Left ventricle myocardium superior (tissue), 1 donor: ENCODE measurements at regions of chr2 and their contacts with region 1.

Region 1: DNA sequence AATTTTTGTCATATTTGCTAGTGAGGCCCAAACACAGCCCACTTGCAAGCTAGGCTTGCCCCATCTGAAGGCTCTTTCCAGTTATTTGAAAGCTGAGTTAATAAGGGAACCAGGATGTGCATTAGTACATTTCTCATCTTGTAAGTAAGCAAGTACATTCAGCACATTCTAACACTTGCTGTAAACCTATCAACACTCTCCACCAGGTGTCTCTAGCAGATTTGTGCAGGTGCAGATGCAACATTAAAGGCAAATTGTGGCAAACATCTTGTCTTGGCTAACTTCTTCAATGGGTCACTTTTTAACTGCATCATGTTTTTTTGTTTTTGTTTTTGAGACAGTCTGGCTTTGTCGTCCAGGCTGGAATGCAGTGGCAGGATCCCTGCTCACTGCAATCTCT is 25.3 kb upstream of the MFSD6 start:
- DNase-seq: no peak
- ATAC-seq: peak; percentile 64

Region 2: GRCh38 chr2:190088917-190089316 is 293.9 kb before region 1 on chr2:
- intact Hi-C with region 1: loop called (anchors 10 kb)
- DNase-seq: no peak
- ATAC-seq: peak; percentile 69

Region 3: GRCh38 chr2:190507135-190507534 is 124.3 kb after region 1 on chr2:
- intact Hi-C with region 1: loop called (anchors 10 kb)
- DNase-seq: no peak
- ATAC-seq: no peak